ENCODE measurements at regions of chr7 and their contacts with region 1.

Region 1: GRCh38 chr7:120950539-120951308 is at the start of gene ING3:
- DNase-seq: peak; percentile 98 to 99 (median 98)
- H3K4me3 ChIP-seq: peak within 1 kb of the TSS; percentile 80 to 93
- H3K4me3 Mint-ChIP-seq: peak within 1 kb of the TSS; percentile 91 to 99 (median 96)
- H3K27ac ChIP-seq: peak within 1 kb of the TSS; percentile 99
- H3K27ac Mint-ChIP-seq: peak within 1 kb of the TSS; percentile 98 to 99 (median 99)
- H3K4me1 ChIP-seq: peaks cover 27% of the 10 kb centered on the region
- H3K4me1 Mint-ChIP-seq: peaks cover 13 to 33% (median 19%) of the 10 kb centered on the region in 4 donors
- H3K27me3 ChIP-seq: no peaks in the 10 kb centered on the region
- H3K27me3 Mint-ChIP-seq: peaks cover 7 to 14% of the 10 kb centered on the region in 2 donors
- total RNA-seq, gene ING3: 24.1 to 26.5 TPM

Region 2: DNA sequence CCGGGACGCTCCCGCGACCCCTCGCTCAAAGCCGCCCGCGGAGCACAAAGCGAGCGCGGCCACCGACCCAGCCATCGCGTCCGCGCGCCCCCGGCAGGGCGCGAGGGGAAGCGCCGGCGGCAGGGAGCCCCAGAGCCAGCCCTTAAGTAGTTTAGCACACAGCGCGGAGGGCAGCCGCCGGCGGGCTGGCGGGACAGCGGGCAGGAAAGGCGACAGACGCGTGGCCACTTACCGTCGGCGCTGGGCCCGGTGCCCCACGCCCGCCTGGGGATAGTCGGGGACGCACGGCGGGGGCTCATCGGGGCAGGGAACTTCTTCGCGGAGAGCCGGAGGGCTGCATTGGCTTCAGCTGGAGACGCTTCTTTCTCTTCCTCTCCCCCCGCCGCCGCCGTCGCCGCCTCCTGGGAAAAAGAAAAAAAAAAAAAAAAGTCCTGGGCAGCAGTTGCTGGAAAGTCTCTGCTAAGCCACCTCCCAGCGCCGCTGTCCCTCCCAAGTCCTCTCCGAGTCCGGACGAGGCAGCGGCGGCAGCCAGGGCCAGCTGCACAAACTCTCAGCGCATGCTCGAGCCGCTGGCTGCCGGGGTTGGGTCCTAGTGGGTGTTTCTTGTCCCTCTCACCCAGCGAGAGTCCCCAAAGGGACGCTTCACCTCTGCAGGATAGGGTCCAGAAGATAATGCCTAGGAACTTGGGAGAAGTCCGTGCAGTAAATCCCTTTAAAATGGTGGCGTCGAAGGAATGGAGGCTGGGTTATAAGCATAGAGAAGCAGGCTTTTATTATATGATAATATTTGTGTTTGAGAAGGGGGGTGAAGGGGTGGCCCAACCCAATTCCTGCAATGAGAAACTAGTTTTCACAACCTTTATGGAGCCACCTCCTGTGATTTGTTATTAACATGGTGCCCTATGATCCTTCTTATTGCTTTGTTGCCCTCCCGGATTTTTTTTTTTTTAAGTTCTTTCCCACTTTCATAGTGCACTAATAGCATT is 92.8 kb before region 1 on chr7 and contains the start of gene TSPAN12:
- CTCF ChIA-PET with region 1: no interaction called
- POLR2A ChIA-PET with region 1: no interaction called
- intact Hi-C with region 1: loop called (anchors 5 kb)
- DNase-seq: peak; percentile 25 to 38 (median 34)
- H3K4me3 ChIP-seq: peak within 1 kb of the TSS; percentile 8 to 32
- H3K4me3 Mint-ChIP-seq: peak within 1 kb of the TSS; percentile 81 to 96 (median 90)
- H3K27ac ChIP-seq: no peak within 1 kb of the TSS
- H3K27ac Mint-ChIP-seq: no peak within 1 kb of the TSS
- H3K4me1 ChIP-seq: peaks cover 13% of the 10 kb centered on the region
- H3K4me1 Mint-ChIP-seq: peaks cover 9 to 17% (median 12%) of the 10 kb centered on the region in 4 donors
- H3K27me3 ChIP-seq: peaks cover 15% of the 10 kb centered on the region
- H3K27me3 Mint-ChIP-seq: peaks cover 32 to 53% of the 10 kb centered on the region in 2 donors
- total RNA-seq, gene TSPAN12: not detected

Region 3: GRCh38 chr7:121530227-121531174 is 579.8 kb after region 1 on chr7:
- CTCF ChIA-PET with region 1: no interaction called
- POLR2A ChIA-PET with region 1: no interaction called
- intact Hi-C with region 1: loop called (anchors 5 kb)
- DNase-seq: peak; percentile 12 to 60 (median 20)
- H3K4me3 ChIP-seq: no peak overlapping the region
- H3K4me3 Mint-ChIP-seq: peak overlapping the region in 1 of 8 donors; percentile 48
- H3K27ac ChIP-seq: no peak overlapping the region
- H3K27ac Mint-ChIP-seq: peak overlapping the region in 4 of 7 donors; percentile 1 to 57 (median 2)
- H3K4me1 ChIP-seq: no peaks in the 10 kb centered on the region
- H3K4me1 Mint-ChIP-seq: peaks cover 4 to 13% (median 5%) of the 10 kb centered on the region in 4 donors
- H3K27me3 ChIP-seq: no peaks in the 10 kb centered on the region
- H3K27me3 Mint-ChIP-seq: no peaks in the 10 kb centered on the region